Prostate gland (tissue), 2 donors: ENCODE measurements at regions of chr18 and their contacts with region 1.

Region 1: GRCh38 chr18:70195852-70196434 is 9.5 kb downstream of the RTTN start:
- DNase-seq: peak; percentile 10
- H3K4me3 ChIP-seq: no peak overlapping the region
- H3K27ac ChIP-seq: no peak overlapping the region
- H3K4me1 ChIP-seq: no peaks in the 10 kb centered on the region
- H3K27me3 ChIP-seq: no peaks in the 10 kb centered on the region
- CTCF ChIP-seq: peak in 3 of 4 experiments; percentile 65 to 76 (median 72)
- POLR2A ChIP-seq: no peak

Region 2: GRCh38 chr18:70158992-70159717 is 36.8 kb before region 1 on chr18:
- intact Hi-C with region 1: no loop called
- DNase-seq: no peak
- H3K4me3 ChIP-seq: no peak overlapping the region
- H3K27ac ChIP-seq: no peak overlapping the region
- H3K4me1 ChIP-seq: no peaks in the 10 kb centered on the region
- H3K27me3 ChIP-seq: no peaks in the 10 kb centered on the region
- CTCF ChIP-seq: no peak
- POLR2A ChIP-seq: no peak

Region 3: GRCh38 chr18:70256994-70257393 is 61.1 kb after region 1 on chr18:
- intact Hi-C with region 1: no loop called
- DNase-seq: no peak
- H3K4me3 ChIP-seq: no peak overlapping the region
- H3K27ac ChIP-seq: no peak overlapping the region
- H3K4me1 ChIP-seq: no peaks in the 10 kb centered on the region
- H3K27me3 ChIP-seq: no peaks in the 10 kb centered on the region
- CTCF ChIP-seq: no peak
- POLR2A ChIP-seq: no peak

Region 4: DNA sequence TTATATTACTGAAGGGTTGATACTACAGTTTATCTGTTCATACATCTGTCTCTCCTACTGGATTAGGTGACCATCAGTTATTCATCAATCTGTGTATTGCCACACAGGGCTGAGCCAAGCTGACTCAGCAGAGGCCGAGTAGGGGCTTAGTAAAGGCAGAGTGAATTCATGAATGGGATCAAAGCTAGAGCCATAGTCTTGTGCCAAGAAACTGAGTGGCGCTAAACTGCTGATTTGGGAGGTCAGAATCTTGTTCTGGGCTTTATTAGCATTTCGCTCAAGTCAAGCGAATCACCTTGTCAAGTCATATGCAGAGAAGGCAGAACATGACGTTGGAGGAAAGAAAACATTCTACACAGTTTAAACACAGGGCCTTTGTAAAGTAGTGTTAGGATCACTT is 127.0 kb after region 1 on chr18:
- intact Hi-C with region 1: no loop called
- DNase-seq: no peak
- H3K4me3 ChIP-seq: no peak overlapping the region
- H3K27ac ChIP-seq: no peak overlapping the region
- H3K4me1 ChIP-seq: no peaks in the 10 kb centered on the region
- H3K27me3 ChIP-seq: no peaks in the 10 kb centered on the region
- CTCF ChIP-seq: no peak
- POLR2A ChIP-seq: no peak

Region 5: GRCh38 chr18:70431203-70431624 is 235.3 kb after region 1 on chr18:
- intact Hi-C with region 1: loop called (anchors 5 kb)
- DNase-seq: no peak
- H3K4me3 ChIP-seq: no peak overlapping the region
- H3K27ac ChIP-seq: no peak overlapping the region
- H3K4me1 ChIP-seq: no peaks in the 10 kb centered on the region
- H3K27me3 ChIP-seq: no peaks in the 10 kb centered on the region
- CTCF ChIP-seq: no peak
- POLR2A ChIP-seq: no peak